Mammary epithelial cell (primary cell): ENCODE measurements at regions of chr6 and their contacts with region 1.

Region 1: DNA sequence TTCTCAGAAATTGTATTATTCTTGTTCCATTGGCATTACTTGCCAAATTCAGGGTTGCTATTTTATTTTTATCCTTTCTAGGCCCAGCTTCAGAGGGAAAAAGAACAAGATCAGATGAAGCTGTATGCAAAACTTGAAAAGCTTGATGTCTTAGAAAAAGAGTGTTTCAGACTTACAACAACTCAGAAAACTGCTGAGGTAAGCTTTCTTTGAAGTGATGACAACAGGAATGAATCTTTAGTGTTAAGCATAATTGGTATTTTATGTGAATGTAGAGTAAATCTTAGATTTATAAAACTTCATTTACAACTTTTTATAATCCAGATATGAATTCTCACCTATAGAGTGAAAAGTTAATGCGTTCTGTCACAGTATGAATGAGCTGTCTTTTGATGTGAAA is 58.4 kb downstream of the CEP57L1 start:
- DNase-seq: no peak
- H3K4me3 ChIP-seq: no peak overlapping the region
- H3K27ac ChIP-seq: no peak overlapping the region
- H3K4me1 ChIP-seq: no peaks in the 10 kb centered on the region
- H3K27me3 ChIP-seq: no peaks in the 10 kb centered on the region
- CTCF ChIP-seq: no peak

Region 2: GRCh38 chr6:109255946-109256640 is 102.3 kb after region 1 on chr6:
- CTCF ChIA-PET with region 1: interaction called, 29 read pairs
- dilution Hi-C with region 1: no loop called
- in situ Hi-C with region 1: no loop called
- intact Hi-C with region 1: no loop called
- DNase-seq: no peak
- H3K4me3 ChIP-seq: no peak overlapping the region
- H3K27ac ChIP-seq: no peak overlapping the region
- H3K4me1 ChIP-seq: no peaks in the 10 kb centered on the region
- H3K27me3 ChIP-seq: no peaks in the 10 kb centered on the region
- CTCF ChIP-seq: no peak